ENCODE measurements at regions of chr1 and their contacts with region 1.

Region 1: GRCh38 chr1:228664399-228664914 is 70.8 kb upstream of the RHOU start:
- DNase-seq: peak; percentile 91
- H3K4me3 ChIP-seq: no peak overlapping the region
- H3K27ac ChIP-seq: no peak overlapping the region
- H3K4me1 ChIP-seq: peaks cover 0 to 19% (median 9%) of the 10 kb centered on the region in 4 donors
- H3K27me3 ChIP-seq: no peaks in the 10 kb centered on the region
- CTCF ChIP-seq: peak; percentile 79 to 86 (median 83)
- EP300 ChIP-seq: no peak
- POLR2A ChIP-seq: no peak

Region 2: DNA sequence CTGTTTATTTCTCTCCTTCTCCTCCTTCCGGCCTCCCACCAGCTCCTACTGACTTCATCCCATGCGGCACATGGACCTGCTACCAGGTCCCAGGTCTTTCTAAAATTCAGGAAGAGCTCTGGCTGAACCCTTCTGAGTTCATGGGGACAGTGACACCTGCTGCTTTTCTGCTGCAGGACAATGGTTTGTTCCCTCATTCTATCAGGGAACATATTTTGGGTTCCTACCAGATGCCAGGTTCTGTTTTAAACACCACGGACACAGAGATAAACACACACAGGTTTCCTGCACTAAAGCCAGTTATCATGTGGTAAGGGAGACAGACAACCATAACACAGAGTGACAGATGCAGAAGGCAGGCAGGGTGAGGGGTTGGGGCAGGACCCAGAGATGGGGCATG is 492.4 kb after region 1 on chr1:
- intact Hi-C with region 1: loop called (anchors 10 kb)
- DNase-seq: no peak
- H3K4me3 ChIP-seq: no peak overlapping the region
- H3K27ac ChIP-seq: peak overlapping the region in 2 of 4 donors; percentile 22 to 30
- H3K4me1 ChIP-seq: peaks cover 7 to 25% (median 21%) of the 10 kb centered on the region in 4 donors
- H3K27me3 ChIP-seq: no peaks in the 10 kb centered on the region
- CTCF ChIP-seq: peak; percentile 59 to 75 (median 72)
- EP300 ChIP-seq: no peak
- POLR2A ChIP-seq: no peak

Region 3: GRCh38 chr1:229227298-229227919 is 563.0 kb after region 1 on chr1:
- intact Hi-C with region 1: loop called (anchors 10 kb)
- DNase-seq: no peak
- H3K4me3 ChIP-seq: no peak overlapping the region
- H3K27ac ChIP-seq: peak overlapping the region in 1 of 4 donors; percentile 17
- H3K4me1 ChIP-seq: peaks cover 24 to 64% (median 55%) of the 10 kb centered on the region in 4 donors
- H3K27me3 ChIP-seq: no peaks in the 10 kb centered on the region
- CTCF ChIP-seq: peak; percentile 85 to 89 (median 86)
- EP300 ChIP-seq: no peak
- POLR2A ChIP-seq: no peak

Region 4: DNA sequence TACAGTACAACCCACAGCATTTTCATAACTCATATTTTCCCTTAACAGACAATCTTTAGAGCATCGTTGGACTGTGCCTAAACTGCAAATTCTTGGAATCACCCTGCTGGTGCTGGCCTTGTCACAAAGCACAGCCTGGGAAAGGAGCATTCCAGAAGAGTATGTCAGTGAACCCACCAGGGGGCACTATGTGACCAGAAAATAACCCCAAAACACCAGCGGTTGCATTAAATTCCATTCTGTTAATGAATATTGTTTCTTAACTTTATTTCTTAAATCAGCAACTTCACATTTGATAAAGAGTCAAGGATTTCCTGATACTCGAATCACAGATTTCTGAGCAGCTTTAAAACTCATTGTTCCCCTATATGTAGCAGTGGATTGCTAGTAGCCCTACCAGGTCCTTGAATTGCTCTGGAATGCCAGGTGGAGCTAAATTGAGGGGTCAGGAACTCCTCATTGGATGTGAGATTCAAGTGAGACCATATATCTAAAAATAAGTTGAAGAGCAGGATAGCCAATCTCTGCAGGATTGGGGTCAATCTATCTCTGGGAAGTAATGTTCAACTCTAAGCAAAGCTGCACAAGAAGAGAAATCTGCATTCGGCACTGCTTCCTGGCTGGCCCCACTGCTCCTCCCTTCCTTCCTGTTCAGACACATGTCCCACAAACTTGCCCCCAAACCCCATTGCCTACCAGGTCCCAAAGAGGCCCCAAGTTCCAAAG is 593.7 kb after region 1 on chr1:
- intact Hi-C with region 1: loop called (anchors 5 kb)
- DNase-seq: no peak
- H3K4me3 ChIP-seq: no peak overlapping the region
- H3K27ac ChIP-seq: no peak overlapping the region
- H3K4me1 ChIP-seq: peaks cover 7 to 15% (median 12%) of the 10 kb centered on the region in 4 donors
- H3K27me3 ChIP-seq: no peaks in the 10 kb centered on the region
- CTCF ChIP-seq: peak; percentile 78 to 91 (median 79)
- EP300 ChIP-seq: no peak
- POLR2A ChIP-seq: no peak

Region 5: DNA sequence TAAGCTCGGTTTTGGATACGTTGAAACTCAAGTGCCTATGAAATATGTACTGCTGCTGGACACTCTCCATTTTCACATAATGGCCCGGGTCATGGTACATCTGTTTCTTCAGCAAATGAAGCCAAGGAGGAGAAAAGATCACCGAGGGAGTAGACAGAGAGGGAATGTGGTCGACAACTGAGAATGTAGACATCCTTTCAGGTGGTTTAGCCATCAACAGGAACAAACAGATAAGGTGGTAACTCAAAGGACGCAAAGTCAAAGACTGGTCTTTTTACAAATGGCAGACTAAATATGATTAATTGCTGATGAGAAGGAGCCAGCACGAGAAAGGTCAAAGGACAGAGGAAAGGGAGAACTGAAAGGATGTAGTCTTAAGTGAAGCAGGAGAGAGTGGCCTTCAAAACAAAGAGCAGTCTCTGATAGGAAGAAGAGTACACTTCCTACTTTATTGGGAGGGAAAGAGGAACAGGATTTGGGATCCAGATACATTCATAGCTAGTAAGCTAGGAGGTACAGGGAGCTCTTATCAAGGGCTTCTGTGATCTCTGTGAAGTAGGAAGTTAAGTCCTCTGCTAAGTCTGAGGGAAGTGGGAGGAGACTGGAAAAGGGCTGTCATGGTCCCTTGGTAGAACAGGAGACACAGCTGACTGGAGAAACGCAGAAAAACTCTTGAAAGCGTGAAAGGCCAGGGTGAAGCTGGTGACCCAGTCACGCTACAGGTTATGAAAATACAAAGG is 815.4 kb after region 1 on chr1:
- intact Hi-C with region 1: loop called (anchors 10 kb)
- DNase-seq: no peak
- H3K4me3 ChIP-seq: no peak overlapping the region
- H3K27ac ChIP-seq: no peak overlapping the region
- H3K4me1 ChIP-seq: peaks cover 0 to 16% (median 13%) of the 10 kb centered on the region in 4 donors
- H3K27me3 ChIP-seq: no peaks in the 10 kb centered on the region
- CTCF ChIP-seq: no peak
- EP300 ChIP-seq: no peak
- POLR2A ChIP-seq: no peak